A549 (cell line): ENCODE measurements at regions of chr1 and their contacts with region 1.

Region 1: DNA sequence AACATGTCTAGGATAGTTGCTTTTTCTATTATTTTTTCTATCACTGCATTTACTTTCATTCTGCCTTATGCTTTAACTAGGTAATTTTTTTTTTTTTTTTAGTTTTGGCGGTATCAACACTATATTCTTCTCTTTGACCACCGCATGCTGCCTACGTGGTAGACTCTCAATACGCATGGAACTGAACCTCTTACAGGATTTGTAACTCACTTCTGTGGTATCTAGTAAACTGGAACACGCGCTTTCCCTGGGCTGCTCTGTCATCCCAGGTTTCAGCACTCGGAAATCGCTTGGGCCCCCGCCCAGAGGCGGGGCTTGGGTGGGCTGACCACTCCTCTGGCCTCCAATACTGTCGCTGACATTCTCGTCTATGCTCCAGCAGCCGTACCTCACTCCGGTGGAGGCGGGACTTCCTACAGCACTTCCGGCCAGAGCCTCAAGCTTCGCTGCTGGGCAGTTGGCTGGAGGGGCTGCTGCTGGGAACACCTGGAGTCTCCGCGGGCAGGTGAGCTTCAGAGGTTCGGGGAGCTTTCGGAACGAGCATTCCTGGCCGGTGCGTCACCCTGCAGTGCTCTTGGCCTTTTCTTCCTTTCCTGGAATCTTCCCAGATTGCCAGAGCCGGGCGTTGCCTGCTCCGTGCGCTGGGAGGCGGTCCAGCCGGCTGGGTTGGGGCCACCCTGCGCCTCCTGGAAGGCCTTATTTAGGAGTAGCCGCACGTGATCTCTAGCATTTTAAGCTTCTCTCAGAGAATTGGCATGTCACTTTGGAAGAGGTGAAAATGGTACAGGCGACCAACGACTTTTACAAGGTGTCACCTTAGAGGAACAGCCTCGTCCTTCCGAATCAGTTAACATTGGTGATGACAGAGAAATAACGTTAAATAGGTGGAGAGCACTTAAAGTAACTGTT is at the start of gene TBCE:
- DNase-seq: peak; percentile 96 to 97
- ATAC-seq: peak; percentile 100
- H3K4me3 ChIP-seq: peak within 1 kb of the TSS; percentile 65
- H3K27ac ChIP-seq: peak within 1 kb of the TSS; percentile 84 to 95
- H3K4me1 ChIP-seq: peaks cover 4% of the 10 kb centered on the region; the same call in 1 of the 3 replicates
- CTCF ChIP-seq: no peak; the same call in 2 of the 3 replicates
- EP300 ChIP-seq: no peak
- POLR2A ChIP-seq: peak; percentile 96
- RAD21 ChIP-seq: peak in 1 of 2 experiments; percentile 24; a peak in 3 of 5 replicates
- polyA plus RNA-seq, gene TBCE: 58.3 and 65.2 TPM in 2 replicates

Region 2: DNA sequence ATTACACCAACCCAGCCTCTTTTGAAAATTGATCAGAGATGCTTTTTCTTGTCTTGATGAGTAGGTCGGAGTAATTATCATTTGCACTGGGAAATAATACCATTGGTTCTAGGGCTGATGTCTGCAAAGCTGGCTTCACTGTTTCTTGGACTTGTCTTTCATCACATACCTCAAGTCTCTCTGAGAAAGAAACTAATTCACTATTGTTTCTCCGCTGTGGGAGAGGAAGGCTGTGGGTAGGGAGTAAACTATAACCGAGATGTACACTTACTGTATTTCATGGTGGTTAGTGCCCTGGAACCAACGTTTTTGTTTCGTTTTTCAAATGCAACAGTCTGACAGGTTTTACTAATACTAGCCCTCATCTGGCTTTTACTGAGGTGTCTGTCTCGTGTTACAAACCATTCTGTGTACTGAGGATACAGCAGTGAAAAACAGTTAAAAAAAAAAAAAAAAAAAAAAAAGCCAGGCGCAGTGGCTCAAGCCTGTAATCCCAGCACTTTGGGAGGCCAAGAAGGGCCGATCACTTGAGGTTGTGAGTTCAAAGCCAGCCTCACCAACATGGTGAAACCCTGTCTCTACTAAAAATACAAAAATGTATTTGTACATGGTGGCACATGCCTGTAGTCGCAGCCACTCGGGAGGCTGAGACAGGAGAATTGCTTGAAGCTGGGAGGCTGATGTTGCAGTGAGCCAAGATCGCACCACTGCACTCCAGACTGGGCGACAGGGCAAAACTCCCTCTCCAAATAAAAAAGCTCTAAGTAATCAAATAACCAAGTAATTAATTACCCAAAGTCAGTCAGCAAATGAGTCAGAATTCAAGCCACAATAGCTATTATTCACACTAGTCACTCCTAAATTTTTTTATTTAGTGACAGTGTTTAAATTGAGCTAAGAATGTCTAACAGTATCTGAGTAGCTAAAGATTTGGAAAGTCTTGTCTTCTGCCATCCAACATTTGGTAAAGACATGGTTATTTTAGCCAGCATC is 261.9 kb before region 1 on chr1:
- CTCF ChIA-PET with region 1: no interaction called
- POLR2A ChIA-PET with region 1: no interaction called
- DNase-seq: no peak
- ATAC-seq: peak; percentile 15 to 22; a peak in 4 of 6 replicates
- H3K4me3 ChIP-seq: no peak overlapping the region
- H3K27ac ChIP-seq: no peak overlapping the region; a peak in 1 of 6 replicates
- H3K4me1 ChIP-seq: peaks cover 9% of the 10 kb centered on the region; the same call in 2 of the 3 replicates
- CTCF ChIP-seq: no peak
- EP300 ChIP-seq: no peak
- POLR2A ChIP-seq: no peak
- RAD21 ChIP-seq: no peak

Region 3: GRCh38 chr1:235304549-235305451 is 62.5 kb before region 1 on chr1:
- CTCF ChIA-PET with region 1: no interaction called
- POLR2A ChIA-PET with region 1: no interaction called
- DNase-seq: no peak
- ATAC-seq: peak in 1 of 2 experiments; percentile 43; a peak in 1 of 6 replicates
- H3K4me3 ChIP-seq: no peak overlapping the region
- H3K27ac ChIP-seq: no peak overlapping the region
- H3K4me1 ChIP-seq: no peaks in the 10 kb centered on the region
- CTCF ChIP-seq: no peak
- EP300 ChIP-seq: no peak
- POLR2A ChIP-seq: no peak
- RAD21 ChIP-seq: no peak

Region 4: GRCh38 chr1:235328357-235329138 is 38.7 kb before region 1 on chr1 and contains the start of gene GGPS1:
- CTCF ChIA-PET with region 1: no interaction called
- POLR2A ChIA-PET with region 1: interaction called, 10 read pairs
- DNase-seq: peak; percentile 94 to 100
- ATAC-seq: peak; percentile 85 to 87
- H3K4me3 ChIP-seq: peak within 1 kb of the TSS; percentile 96
- H3K27ac ChIP-seq: peak within 1 kb of the TSS; percentile 88 to 94
- H3K4me1 ChIP-seq: peaks cover 48% of the 10 kb centered on the region
- CTCF ChIP-seq: 0 out of 3 replicates have a peak, but pooled peaks have one; percentile 12
- EP300 ChIP-seq: no peak
- POLR2A ChIP-seq: peak; percentile 78
- RAD21 ChIP-seq: 0 out of 5 replicates have a peak, but pooled peaks of 1 of the 2 experiments have one; percentile 1
- polyA plus RNA-seq, gene GGPS1: 57.7 and 58.5 TPM in 2 replicates

Region 5: GRCh38 chr1:235504496-235505222 is 137.4 kb after region 1 on chr1:
- CTCF ChIA-PET with region 1: no interaction called
- POLR2A ChIA-PET with region 1: interaction called, 11 read pairs
- DNase-seq: peak; percentile 89 to 99
- ATAC-seq: peak; percentile 84 to 91
- H3K4me3 ChIP-seq: peak overlapping the region; percentile 82
- H3K27ac ChIP-seq: peak overlapping the region; percentile 89 to 97
- H3K4me1 ChIP-seq: peaks cover 19% of the 10 kb centered on the region
- CTCF ChIP-seq: peak; percentile 73
- EP300 ChIP-seq: no peak
- POLR2A ChIP-seq: peak; percentile 67
- RAD21 ChIP-seq: peak; percentile 42 to 48; a peak in 3 of 5 replicates